ENCODE measurements at regions of chr1 and their contacts with region 1.

Region 1: DNA sequence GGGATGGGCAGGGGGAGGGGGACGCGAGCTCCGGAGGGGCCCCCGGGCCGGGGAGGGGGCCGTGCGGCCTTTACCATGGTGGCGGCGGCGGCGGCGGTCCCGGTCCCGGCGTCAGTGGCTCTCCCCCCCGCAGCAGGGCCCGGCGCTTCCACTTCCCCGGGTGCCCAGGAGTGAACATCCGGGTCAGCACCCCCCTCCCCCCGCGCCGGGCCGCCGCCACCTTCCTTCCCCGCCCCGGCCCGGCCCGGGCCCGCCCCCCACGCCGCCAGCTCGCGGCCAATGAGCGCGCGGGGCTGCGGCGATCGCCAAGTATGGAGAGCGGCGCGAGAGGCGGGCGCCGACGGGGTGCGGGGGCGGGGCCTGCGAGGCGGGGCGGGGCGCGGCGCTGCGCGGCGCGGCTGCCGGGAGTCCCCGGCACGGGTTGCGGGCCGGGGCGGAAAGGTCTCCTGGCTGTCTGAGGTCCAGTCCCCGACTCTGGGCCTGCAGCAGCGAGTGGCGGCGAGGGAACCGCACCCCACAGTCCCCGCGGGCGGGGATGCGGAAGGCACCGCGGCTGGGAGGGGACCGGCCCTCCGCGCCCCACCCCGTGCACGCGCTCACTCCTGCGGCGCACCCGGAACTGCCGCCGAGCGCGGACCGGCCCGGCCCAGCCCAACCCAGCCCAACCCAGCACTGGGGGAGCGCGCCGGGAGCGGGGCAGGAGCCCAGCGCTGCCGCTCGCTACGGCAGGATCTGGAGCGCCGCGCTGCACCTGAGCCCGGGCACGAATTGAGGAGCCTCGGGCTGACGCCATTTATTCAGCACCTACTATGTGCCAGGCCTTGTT is at the start of gene CAPZB:
- DNase-seq: peak; percentile 98
- ATAC-seq: peak; percentile 93
- total RNA-seq, gene CAPZB: 267 TPM

Region 2: GRCh38 chr1:19390901-19391595 is 94.5 kb before region 1 on chr1:
- intact Hi-C with region 1: loop called (anchors 5 kb)
- DNase-seq: no peak
- ATAC-seq: peak; percentile 31

Region 3: GRCh38 chr1:19400875-19401534 is 84.6 kb before region 1 on chr1:
- intact Hi-C with region 1: loop called (anchors 5 kb)
- DNase-seq: no peak
- ATAC-seq: no peak

Region 4: DNA sequence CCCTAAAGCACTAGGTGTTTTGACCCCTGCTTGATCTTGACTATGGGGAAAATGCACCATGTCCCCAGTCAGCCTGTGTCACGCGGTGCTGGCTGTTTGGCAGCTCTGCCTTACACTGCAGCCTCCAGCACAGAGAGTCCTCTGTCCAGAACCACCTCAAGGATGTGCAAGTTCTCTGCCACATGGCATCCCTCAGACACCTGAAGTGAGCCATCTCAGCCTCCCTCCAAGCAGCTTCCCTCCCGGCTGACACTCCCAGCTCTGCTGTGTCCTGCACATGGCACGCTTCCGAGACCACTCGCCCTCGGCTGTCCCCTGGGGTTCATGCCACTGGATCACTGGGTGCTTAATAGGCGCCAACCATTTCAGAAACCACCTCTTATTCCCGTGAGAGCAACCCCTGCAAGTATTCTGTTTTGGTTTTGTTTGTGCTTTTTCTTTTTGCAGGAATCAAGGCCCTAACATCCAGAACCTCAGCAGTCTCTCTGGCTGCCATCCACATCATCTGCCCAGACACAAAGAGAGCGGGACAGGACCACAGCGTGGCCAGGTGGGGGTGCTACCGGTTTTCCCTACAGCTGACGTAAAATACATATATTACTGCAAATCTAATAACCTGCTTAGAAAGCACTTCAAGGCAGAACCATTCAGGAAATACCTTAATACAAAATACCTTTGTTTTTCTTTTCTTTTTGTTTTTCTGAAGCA is 46.0 kb before region 1 on chr1:
- intact Hi-C with region 1: loop called (anchors 5 kb)
- DNase-seq: no peak
- ATAC-seq: peak; percentile 50

Region 5: DNA sequence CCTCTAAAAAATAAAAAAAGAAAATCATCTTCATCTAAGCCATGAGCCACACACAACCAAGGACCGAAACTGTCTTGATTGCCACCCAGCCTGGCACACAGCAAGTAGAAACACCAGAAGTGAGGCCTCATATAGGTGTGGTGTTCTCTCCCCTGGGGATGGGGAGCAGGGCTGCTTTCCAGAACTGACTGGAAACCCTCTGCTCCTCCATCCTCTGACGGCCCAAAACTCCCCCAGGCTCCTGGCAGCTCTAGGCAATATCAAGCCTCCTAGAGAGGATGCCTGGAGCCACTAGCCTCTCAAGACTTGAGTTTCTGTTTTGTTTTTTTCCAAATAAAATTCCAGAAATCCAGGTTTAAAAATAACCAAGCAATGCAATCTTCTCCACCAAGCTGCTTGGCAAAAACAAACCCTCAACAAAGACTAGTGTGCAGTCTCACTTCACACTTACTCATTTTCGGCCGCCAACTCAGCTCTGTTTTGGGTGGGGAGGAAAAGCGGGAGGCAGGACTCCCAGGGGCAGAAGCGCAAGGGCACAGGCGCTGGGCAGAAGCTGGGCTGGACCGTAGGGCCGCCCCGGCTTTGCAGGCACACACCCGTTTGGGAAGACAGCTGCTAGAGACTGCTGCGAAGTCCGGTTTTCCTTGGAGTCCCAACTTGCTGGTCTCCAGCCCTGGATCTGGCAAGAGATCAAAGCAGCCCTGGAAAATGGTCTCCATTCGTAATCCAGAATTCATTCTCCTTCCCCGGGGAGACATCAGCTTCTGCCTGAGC is 77.9 kb after region 1 on chr1:
- intact Hi-C with region 1: loop called (anchors 5 kb)
- DNase-seq: peak; percentile 73
- ATAC-seq: peak; percentile 88

Region 6: DNA sequence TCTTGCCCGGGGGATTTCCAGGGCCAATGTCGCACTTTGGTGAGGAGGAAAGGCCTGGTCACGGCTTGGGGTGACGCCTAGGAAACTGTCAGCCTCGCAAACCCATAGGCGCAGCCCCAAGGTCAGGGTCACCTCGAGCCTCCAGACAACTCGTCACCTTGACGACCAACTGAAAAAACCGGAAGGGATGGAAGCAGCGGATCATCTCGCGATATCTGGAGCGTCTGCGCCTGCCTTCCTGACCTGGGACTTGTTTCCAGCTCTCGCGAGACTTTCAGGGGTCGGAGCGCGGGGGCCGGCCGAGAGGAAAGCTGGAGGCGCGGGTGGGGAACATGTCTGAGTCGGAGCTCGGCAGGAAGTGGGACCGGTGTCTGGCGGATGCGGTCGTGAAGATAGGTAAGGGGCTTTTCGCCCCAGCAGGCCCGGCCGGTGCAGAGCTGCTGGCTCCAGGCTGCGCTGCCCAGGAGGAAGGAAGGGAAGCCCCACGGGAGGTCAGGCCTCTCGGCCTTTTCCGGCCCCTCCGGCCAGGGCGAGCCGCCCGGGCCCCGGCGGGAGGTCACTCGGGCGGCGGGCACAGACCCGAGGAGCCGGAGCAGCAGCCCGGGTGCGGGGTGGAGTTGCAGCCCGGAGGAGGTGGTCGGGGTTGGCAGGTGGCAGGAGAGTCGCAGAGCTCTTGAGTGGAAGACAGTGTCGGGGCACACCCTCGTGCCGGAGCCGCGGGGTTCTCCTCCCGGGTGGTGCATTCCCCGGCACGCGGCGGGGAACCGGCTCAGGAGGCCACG is 111.3 kb after region 1 on chr1:
- intact Hi-C with region 1: loop called (anchors 2 kb)
- DNase-seq: peak; percentile 96
- ATAC-seq: peak; percentile 93

Region 7: GRCh38 chr1:19643602-19644394 is 158.2 kb after region 1 on chr1 and contains the start of gene NBL1:
- intact Hi-C with region 1: loop called (anchors 5 kb)
- DNase-seq: peak; percentile 80
- ATAC-seq: peak; percentile 86
- total RNA-seq, gene NBL1: 55.0 TPM

Measured in Right ventricle myocardium inferior (tissue), 1 donor.